Activated CD8-positive, alpha-beta memory T cell treated with anti-CD3 and anti-CD28 coated beads, Interleukin-2, amount 10 ng/mL, durations not matched to agents 7 days and 5 days (primary cell): ENCODE measurements at regions of chr3 and their contacts with region 1.

Region 1: DNA sequence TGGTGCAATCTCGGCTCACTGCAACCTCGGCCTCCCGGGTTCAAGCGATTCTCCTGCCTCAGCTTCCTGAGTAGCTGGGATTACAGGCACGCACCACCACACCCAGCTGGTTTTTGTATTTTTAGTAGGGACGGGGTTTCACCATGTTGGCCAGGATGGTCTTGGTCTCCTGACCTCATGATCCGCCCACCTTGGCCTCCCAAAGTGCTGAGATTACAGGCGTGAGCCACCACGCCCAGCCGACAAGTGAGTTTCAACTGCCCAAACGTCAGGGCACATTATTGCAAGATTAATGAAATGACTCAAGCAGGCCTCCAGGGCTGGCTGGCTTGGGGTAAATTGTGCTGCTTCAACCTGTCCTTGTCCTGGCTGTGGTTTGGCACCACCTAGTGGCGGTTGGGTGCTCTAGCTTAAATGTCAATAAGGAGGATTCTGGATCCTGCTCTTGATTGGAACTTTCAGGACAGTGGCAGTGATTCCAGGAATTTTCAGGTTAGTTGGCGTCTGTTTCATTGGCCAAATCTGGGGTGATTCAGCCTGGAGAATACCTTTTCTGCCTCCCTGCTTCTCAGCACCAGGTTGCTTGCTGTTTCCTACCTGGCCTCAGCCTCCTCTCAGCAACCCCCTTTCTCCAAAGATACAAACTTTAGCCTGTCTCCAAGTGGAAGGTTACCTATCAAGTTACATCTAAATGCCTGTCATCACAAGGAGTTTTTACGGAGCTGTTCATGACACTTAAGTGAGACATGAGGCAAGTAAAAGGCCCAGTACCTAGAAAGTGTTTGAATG is 32.4 kb upstream of the SACM1L start:
- DNase-seq: peak; percentile 92
- ATAC-seq: peak; percentile 97
- H3K4me3 Mint-ChIP-seq: no peak overlapping the region
- H3K27ac Mint-ChIP-seq: peak overlapping the region; percentile 41
- H3K4me1 Mint-ChIP-seq: peaks cover 25% of the 10 kb centered on the region
- H3K27me3 Mint-ChIP-seq: no peaks in the 10 kb centered on the region

Region 2: DNA sequence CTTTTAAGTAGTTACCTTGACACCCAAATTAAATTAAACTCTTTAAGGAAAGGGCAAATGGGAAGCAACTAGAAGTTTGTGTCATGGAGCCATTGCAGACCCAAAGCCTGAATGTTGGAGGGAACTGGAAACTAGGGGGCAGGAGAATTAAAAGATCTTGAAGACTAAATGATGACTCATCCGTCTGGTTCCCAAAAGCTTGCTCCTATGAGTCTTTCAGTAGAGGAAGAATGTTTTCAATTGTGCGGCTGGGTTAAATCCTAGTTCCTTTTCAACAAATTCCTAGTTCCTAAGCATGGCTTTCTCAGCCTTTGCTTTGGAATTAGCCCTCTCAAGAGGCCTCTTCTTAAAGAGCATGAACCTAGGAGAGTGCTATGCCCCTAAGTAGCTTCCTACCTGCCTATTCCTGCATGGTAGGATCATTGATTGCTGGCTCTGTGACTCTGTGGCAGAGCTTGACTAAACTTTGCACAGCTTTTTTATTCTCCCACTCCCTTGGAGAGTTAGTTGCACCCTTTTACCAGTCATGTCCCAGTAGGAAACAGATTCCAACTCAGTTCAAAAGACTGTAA is 613.0 kb before region 1 on chr3:
- CTCF ChIA-PET with region 1: interaction called, 24 read pairs
- DNase-seq: no peak
- ATAC-seq: no peak
- H3K4me3 Mint-ChIP-seq: no peak overlapping the region
- H3K27ac Mint-ChIP-seq: no peak overlapping the region
- H3K4me1 Mint-ChIP-seq: peaks cover 22% of the 10 kb centered on the region
- H3K27me3 Mint-ChIP-seq: peaks cover 30% of the 10 kb centered on the region

Region 3: GRCh38 chr3:45409369-45409768 is 247.4 kb before region 1 on chr3:
- CTCF ChIA-PET with region 1: no interaction called
- DNase-seq: no peak
- ATAC-seq: no peak
- H3K4me3 Mint-ChIP-seq: no peak overlapping the region
- H3K27ac Mint-ChIP-seq: no peak overlapping the region
- H3K4me1 Mint-ChIP-seq: peaks cover 2% of the 10 kb centered on the region
- H3K27me3 Mint-ChIP-seq: no peaks in the 10 kb centered on the region

Region 4: DNA sequence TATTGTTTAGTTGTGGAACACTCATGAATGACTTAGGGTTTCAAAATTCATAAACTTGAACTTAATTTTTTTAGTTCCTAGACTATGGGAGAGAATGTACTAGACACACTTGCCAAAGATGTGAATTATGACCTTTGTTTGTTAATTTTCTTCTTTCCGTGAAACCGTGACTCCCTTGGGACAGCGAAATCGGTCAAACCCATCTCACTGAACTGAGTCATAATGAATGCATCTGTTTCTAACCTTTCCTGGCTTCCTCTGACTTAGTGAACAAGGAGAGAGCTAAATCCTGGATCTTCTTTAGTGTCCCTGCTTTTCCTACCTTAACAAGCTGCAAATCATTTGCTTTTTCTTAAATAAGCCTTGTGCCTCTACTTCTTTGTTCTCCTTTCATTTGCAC is 182.9 kb before region 1 on chr3:
- CTCF ChIA-PET with region 1: no interaction called
- DNase-seq: no peak
- ATAC-seq: no peak
- H3K4me3 Mint-ChIP-seq: no peak overlapping the region
- H3K27ac Mint-ChIP-seq: no peak overlapping the region
- H3K4me1 Mint-ChIP-seq: no peaks in the 10 kb centered on the region
- H3K27me3 Mint-ChIP-seq: no peaks in the 10 kb centered on the region

Region 5: GRCh38 chr3:45513041-45513440 is 143.7 kb before region 1 on chr3:
- CTCF ChIA-PET with region 1: interaction called, 66 read pairs
- DNase-seq: no peak
- ATAC-seq: no peak
- H3K4me3 Mint-ChIP-seq: no peak overlapping the region
- H3K27ac Mint-ChIP-seq: no peak overlapping the region
- H3K4me1 Mint-ChIP-seq: no peaks in the 10 kb centered on the region
- H3K27me3 Mint-ChIP-seq: no peaks in the 10 kb centered on the region

Region 6: DNA sequence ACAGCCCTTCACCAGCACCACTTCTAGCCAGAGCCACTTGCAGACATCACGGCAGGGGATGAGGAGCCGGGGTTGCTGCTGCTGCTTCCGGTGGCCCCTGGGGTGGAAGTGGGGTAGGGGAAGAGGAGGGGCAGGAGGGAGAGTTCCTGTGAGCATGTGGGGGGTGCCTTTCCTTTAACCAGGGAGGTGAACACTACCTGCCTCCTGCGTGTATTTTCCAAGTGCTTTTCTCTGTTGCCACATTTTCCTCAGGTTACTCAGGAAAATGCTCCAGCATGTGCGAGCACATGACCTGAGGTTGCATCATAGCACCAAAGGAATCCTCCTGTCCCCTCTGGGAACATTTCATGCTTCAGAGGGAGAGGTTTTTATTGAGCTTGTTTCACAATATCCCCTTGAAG is 20.3 kb after region 1 on chr3:
- CTCF ChIA-PET with region 1: interaction called, 45 read pairs
- DNase-seq: peak; percentile 83
- ATAC-seq: peak; percentile 92
- H3K4me3 Mint-ChIP-seq: peak overlapping the region; percentile 59
- H3K27ac Mint-ChIP-seq: peak overlapping the region; percentile 94
- H3K4me1 Mint-ChIP-seq: peaks cover 24% of the 10 kb centered on the region
- H3K27me3 Mint-ChIP-seq: no peaks in the 10 kb centered on the region